PC-3 (cell line): ENCODE measurements at regions of chr7 and their contacts with region 1.

Region 1: GRCh38 chr7:98372993-98373392 is 27.9 kb downstream of the BAIAP2L1 start:
- DNase-seq: peak; percentile 92
- ATAC-seq: peak; percentile 65
- H3K4me3 ChIP-seq: no peak overlapping the region
- H3K27ac ChIP-seq: peak overlapping the region; percentile 66
- H3K4me1 ChIP-seq: peaks cover 28% of the 10 kb centered on the region
- H3K27me3 ChIP-seq: no peaks in the 10 kb centered on the region
- CTCF ChIP-seq: no peak

Region 2: DNA sequence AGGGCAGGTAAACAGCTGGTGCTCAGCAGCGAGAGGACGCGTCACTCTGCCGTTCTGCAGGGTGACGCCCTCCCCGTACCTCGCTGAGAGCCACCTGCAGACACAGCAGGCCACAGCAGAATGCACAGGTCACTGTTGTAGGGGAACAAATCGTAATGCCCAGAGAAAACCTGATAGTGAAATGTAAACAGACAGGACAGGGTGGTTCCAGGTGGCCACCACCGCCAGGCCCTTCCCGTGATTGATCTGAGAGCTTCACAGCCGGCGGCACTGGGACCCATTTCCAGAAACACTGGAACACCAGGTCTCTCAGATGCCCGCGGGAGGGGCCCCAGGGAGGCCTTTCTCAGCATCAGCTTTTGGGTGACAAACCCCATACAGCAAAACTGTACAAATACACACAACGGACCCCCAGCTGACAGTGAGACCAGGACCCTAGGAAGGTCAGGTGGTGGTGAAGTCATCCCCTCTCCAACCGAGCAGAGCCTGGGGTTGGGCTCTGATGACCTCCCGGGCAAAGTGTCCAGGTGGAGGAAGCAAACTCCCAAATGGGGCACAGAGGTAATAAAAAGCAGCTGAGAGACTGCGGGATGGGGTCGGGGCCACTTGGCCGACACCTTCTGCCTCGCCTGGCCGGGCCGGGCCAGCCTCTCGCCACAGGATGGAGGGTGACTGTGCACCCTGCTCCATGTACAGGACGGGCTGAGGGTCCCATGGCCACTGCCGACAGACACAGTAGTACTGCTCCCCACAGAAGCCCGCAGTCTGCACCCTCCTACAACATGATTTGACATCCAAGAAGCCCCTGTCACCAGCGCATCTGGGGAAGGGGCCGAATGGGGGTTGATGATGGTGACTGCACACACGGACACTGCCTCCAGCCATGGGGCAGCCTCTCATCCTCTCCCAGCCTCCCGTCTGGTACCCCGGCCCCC is 157.2 kb before region 1 on chr7:
- CTCF ChIA-PET with region 1: no interaction called
- POLR2A ChIA-PET with region 1: interaction called, 18 read pairs
- intact Hi-C with region 1: no loop called
- DNase-seq: no peak
- ATAC-seq: no peak
- H3K4me3 ChIP-seq: no peak overlapping the region
- H3K27ac ChIP-seq: no peak overlapping the region
- H3K4me1 ChIP-seq: no peaks in the 10 kb centered on the region
- H3K27me3 ChIP-seq: no peaks in the 10 kb centered on the region
- CTCF ChIP-seq: no peak

Region 3: GRCh38 chr7:98354511-98355257 is 18.3 kb before region 1 on chr7:
- CTCF ChIA-PET with region 1: no interaction called
- POLR2A ChIA-PET with region 1: interaction called, 4 read pairs
- intact Hi-C with region 1: loop called (anchors 2 kb)
- DNase-seq: peak; percentile 96
- ATAC-seq: peak; percentile 85
- H3K4me3 ChIP-seq: peak overlapping the region; percentile 63
- H3K27ac ChIP-seq: peak overlapping the region; percentile 99
- H3K4me1 ChIP-seq: peaks cover 48% of the 10 kb centered on the region
- H3K27me3 ChIP-seq: no peaks in the 10 kb centered on the region
- CTCF ChIP-seq: no peak